ENCODE measurements at regions of chr17 and their contacts with region 1.

Region 1: GRCh38 chr17:82962864-82963684 is 116.3 kb upstream of the METRNL start:
- DNase-seq: no peak
- ATAC-seq: no peak
- H3K4me3 ChIP-seq: no peak overlapping the region
- H3K27ac ChIP-seq: no peak overlapping the region
- H3K4me1 ChIP-seq: no peaks in the 10 kb centered on the region
- H3K27me3 ChIP-seq: no peaks in the 10 kb centered on the region
- CTCF ChIP-seq: no peak

Region 2: GRCh38 chr17:82648166-82648668 is 314.9 kb before region 1 on chr17 and contains the start of gene WDR45B:
- CTCF ChIA-PET with region 1: interaction called, 16 read pairs
- POLR2A ChIA-PET with region 1: no interaction called
- in situ Hi-C with region 1: no loop called
- intact Hi-C with region 1: no loop called
- DNase-seq: peak; percentile 46
- ATAC-seq: peak; percentile 96
- H3K4me3 ChIP-seq: peak within 1 kb of the TSS; percentile 87 to 98
- H3K27ac ChIP-seq: peak within 1 kb of the TSS; percentile 89
- H3K4me1 ChIP-seq: peaks cover 8% of the 10 kb centered on the region
- H3K27me3 ChIP-seq: no peaks in the 10 kb centered on the region
- CTCF ChIP-seq: no peak
- total RNA-seq, gene WDR45B: 132 TPM

Region 3: GRCh38 chr17:83104552-83105485 is 141.7 kb after region 1 on chr17:
- CTCF ChIA-PET with region 1: interaction called, 11 read pairs
- POLR2A ChIA-PET with region 1: no interaction called
- in situ Hi-C with region 1: no loop called
- intact Hi-C with region 1: no loop called
- DNase-seq: no peak
- ATAC-seq: no peak
- H3K4me3 ChIP-seq: no peak overlapping the region
- H3K27ac ChIP-seq: no peak overlapping the region
- H3K4me1 ChIP-seq: peaks cover 25% of the 10 kb centered on the region
- H3K27me3 ChIP-seq: no peaks in the 10 kb centered on the region
- CTCF ChIP-seq: no peak

Measured in Panc1 (cell line).